ENCODE measurements at regions of chr7 and their contacts with region 1.

Region 1: GRCh38 chr7:43729214-43729923 is at the start of gene COA1:
- DNase-seq: peak; percentile 93
- total RNA-seq, gene COA1: 62.4 TPM

Region 2: DNA sequence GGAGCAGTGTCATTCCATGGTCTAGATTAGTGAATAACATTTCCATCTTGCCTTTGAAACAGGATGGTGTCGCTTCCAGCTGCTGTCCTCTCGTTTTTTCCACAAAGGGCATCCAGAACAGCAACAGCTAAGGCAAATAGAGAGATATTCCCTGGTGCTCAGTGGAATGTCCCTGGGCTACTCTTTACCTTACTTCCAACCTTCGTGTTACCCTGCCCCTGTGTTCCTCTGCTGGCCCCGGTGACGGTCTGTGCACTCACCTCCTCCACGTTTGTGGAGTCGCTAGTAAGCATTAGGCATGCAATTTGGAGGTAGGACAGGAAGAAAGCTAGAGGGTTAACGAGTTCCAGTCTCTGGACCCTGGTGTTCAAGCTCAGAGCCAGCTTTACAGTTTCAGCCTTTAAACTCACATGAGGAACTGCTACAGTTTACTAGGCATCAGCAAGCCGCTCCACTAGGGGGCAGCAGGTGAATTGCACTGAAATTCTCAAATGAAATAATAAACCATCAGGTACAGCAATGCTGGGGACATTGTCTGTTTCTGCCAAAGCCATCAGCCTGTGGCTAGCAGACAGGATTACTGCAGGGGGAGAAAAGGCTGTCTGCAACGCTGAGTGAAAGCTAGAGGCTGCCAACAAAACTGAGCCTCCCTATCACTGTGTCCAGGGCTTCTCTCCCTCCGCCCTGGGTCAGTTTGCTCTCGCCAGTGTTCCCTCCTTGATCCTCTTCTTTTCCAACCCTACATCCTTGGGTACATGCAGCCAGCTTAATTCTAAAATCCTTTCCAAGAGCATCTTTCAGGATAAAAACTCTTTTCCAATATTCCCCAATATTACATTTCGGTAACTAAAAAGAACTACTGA is 788.2 kb before region 1 on chr7:
- intact Hi-C with region 1: loop called (anchors 10 kb)
- DNase-seq: no peak

Region 3: GRCh38 chr7:43148161-43148731 is 581.1 kb before region 1 on chr7:
- intact Hi-C with region 1: no loop called
- DNase-seq: no peak

Region 4: GRCh38 chr7:43465581-43466554 is 263.5 kb before region 1 on chr7:
- intact Hi-C with region 1: loop called (anchors 10 kb)
- DNase-seq: no peak

Region 5: GRCh38 chr7:43582503-43583423 is 146.6 kb before region 1 on chr7 and contains the start of gene STK17A:
- intact Hi-C with region 1: loop called (anchors 2 kb)
- DNase-seq: peak; percentile 98
- total RNA-seq, gene STK17A: 40.3 TPM

Region 6: GRCh38 chr7:43700059-43700501 is 29.3 kb before region 1 on chr7:
- intact Hi-C with region 1: no loop called
- DNase-seq: no peak

Region 7: GRCh38 chr7:43838201-43838659 is 108.9 kb after region 1 on chr7:
- intact Hi-C with region 1: loop called (anchors 2 kb)
- DNase-seq: no peak